GM10248 (cell line): ENCODE measurements at regions of chr1 and their contacts with region 1.

Region 1: GRCh38 chr1:185238447-185238846 is 78.6 kb downstream of the IVNS1ABP start:
- DNase-seq: no peak
- CTCF ChIP-seq: peak; percentile 15

Region 2: DNA sequence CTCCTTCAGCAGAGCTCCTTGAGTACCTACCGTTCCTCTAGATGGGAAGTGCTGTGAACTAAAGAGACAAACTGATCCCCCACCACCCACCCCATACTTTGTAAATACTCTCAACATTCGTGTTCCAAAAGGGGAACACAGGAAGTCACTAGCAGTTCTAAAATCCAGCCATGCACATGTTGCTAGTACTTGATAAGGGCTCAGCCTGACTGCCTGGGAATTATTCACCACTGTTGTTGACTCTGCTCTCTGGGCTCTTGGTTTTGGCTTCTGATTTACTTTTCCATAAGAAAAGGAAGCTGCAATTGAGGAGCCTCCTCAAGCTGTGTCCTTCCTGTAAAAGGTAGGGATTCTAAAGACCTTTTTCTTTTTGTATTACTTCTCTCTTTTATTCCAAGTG is 11.1 kb after region 1 on chr1:
- CTCF ChIA-PET with region 1: interaction called, 18 read pairs
- POLR2A ChIA-PET with region 1: no interaction called
- DNase-seq: no peak
- CTCF ChIP-seq: no peak

Region 3: GRCh38 chr1:185281245-185281644 is 42.8 kb after region 1 on chr1:
- CTCF ChIA-PET with region 1: no interaction called
- POLR2A ChIA-PET with region 1: no interaction called
- DNase-seq: peak; percentile 40
- CTCF ChIP-seq: no peak